GM18951 (cell line): ENCODE measurements at regions of chr10 and their contacts with region 1.

Region 1: GRCh38 chr10:35119378-35119777 is 7.3 kb upstream of the CREM start:
- POLR2A ChIP-seq: no peak

Region 2: GRCh38 chr10:35212856-35213255 is 93.5 kb after region 1 on chr10:
- in situ Hi-C with region 1: loop called (anchors 5 kb)
- POLR2A ChIP-seq: no peak